ENCODE measurements at regions of chr5 and their contacts with region 1.

Region 1: GRCh38 chr5:65102828-65103711 is 334.3 kb downstream of the CWC27 start:
- DNase-seq: peak; percentile 59 to 60
- H3K4me3 ChIP-seq: peak overlapping the region; percentile 85
- H3K27ac ChIP-seq: peak overlapping the region; percentile 45; the same call in 1 of the 2 replicates
- H3K4me1 ChIP-seq: peaks cover 7% of the 10 kb centered on the region; the same call in 1 of the 2 replicates
- H3K27me3 ChIP-seq: no peaks in the 10 kb centered on the region
- CTCF ChIP-seq: peak; percentile 50

Region 2: DNA sequence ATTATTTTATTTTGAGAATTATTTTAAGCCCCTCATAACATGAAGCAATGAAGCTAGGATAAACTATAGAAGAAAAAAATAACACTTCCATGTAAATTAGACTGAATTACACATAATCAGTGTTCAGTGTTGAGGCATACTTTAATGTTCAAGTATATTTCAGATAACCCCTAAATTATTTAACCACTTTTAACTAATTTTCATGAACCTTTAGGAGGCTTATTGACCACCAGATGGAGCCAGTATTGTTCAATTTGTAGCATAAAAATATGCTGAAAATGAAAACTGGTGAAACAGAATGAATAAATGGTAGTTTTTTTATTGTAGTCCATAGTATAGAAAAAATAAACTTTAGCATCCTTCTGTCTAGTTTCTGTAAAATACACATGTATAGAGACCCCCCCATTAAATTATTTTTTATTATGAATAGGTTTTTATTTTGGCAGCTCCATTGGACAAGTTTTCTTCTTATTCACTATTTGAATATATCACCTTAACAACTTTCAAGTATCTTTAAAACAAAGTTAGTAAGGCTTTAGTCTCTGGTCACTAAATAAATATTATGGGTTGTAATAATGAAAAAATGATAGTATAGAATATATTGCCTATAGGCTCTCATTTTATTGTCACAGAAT is 144.2 kb before region 1 on chr5:
- CTCF ChIA-PET with region 1: no interaction called
- POLR2A ChIA-PET with region 1: no interaction called
- intact Hi-C with region 1: loop called (anchors 5 kb)
- DNase-seq: no peak
- H3K4me3 ChIP-seq: no peak overlapping the region
- H3K27ac ChIP-seq: no peak overlapping the region
- H3K4me1 ChIP-seq: no peaks in the 10 kb centered on the region
- H3K27me3 ChIP-seq: no peaks in the 10 kb centered on the region
- CTCF ChIP-seq: peak; percentile 74

Region 3: GRCh38 chr5:65035211-65036206 is 67.6 kb before region 1 on chr5:
- CTCF ChIA-PET with region 1: no interaction called
- POLR2A ChIA-PET with region 1: no interaction called
- intact Hi-C with region 1: loop called (anchors 2 kb)
- DNase-seq: peak; percentile 73 to 88
- H3K4me3 ChIP-seq: peak overlapping the region; percentile 60
- H3K27ac ChIP-seq: peak overlapping the region; percentile 81
- H3K4me1 ChIP-seq: peaks cover 17% of the 10 kb centered on the region
- H3K27me3 ChIP-seq: no peaks in the 10 kb centered on the region
- CTCF ChIP-seq: no peak

Region 4: GRCh38 chr5:65198456-65199120 is 95.5 kb after region 1 on chr5:
- CTCF ChIA-PET with region 1: no interaction called
- POLR2A ChIA-PET with region 1: no interaction called
- intact Hi-C with region 1: loop called (anchors 5 kb)
- DNase-seq: peak; percentile 35 to 69
- H3K4me3 ChIP-seq: no peak overlapping the region
- H3K27ac ChIP-seq: peak overlapping the region; percentile 23
- H3K4me1 ChIP-seq: peaks cover 19% of the 10 kb centered on the region
- H3K27me3 ChIP-seq: no peaks in the 10 kb centered on the region
- CTCF ChIP-seq: no peak